Activated T-helper 2 cell treated with anti-CD3 and anti-CD28 coated beads, Interferon-gamma antibody, Interleukin-2, Interleukin-4, amounts not matched to agents 10 μg/mL and 5 μg/mL and 100 μg/mL, durations not matched to agents 14 hours and 24 hours and 36 hours (primary cell): ENCODE measurements at regions of chr14 and their contacts with region 1.

Region 1: GRCh38 chr14:23057757-23058653 is 685 bp upstream of the CDH24 start:
- DNase-seq: peak; percentile 79
- H3K4me3 Mint-ChIP-seq: peak overlapping the region; percentile 84
- H3K27ac Mint-ChIP-seq: peak overlapping the region; percentile 51
- H3K4me1 Mint-ChIP-seq: peaks cover 16% of the 10 kb centered on the region
- H3K27me3 Mint-ChIP-seq: peaks cover 7% of the 10 kb centered on the region

Region 2: GRCh38 chr14:22726012-22726411 is 332.0 kb before region 1 on chr14:
- intact Hi-C with region 1: no loop called
- DNase-seq: no peak
- H3K4me3 Mint-ChIP-seq: no peak overlapping the region
- H3K27ac Mint-ChIP-seq: no peak overlapping the region
- H3K4me1 Mint-ChIP-seq: no peaks in the 10 kb centered on the region
- H3K27me3 Mint-ChIP-seq: peaks cover 4% of the 10 kb centered on the region

Region 3: DNA sequence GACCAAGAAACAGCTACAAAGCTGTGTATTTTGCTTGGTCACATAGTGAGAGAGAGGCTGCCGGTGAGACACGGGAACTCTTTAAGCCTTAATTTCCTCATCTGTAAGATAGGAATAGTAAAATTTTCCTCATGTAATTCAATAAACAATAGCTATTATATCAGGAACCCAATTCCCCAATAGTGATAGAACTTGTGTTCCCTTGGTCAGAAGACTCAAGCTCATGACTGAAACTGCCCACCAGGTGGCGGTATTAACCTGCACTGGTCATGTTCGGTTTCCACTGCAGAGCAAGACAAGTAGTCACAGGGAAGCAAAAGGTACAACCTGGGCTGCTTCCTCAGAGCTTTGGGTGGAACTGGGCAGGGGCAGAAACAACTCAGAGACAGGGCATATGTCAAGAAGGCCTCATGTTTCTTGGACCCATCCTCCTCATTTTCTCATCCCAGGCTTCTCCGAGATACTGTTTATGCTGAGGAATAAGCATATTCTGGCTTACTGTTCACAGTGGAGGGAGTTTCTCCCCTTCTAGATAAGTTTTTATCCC is 71.4 kb before region 1 on chr14:
- intact Hi-C with region 1: loop called (anchors 1 kb)
- DNase-seq: peak; percentile 78
- H3K4me3 Mint-ChIP-seq: no peak overlapping the region
- H3K27ac Mint-ChIP-seq: no peak overlapping the region
- H3K4me1 Mint-ChIP-seq: no peaks in the 10 kb centered on the region
- H3K27me3 Mint-ChIP-seq: no peaks in the 10 kb centered on the region

Region 4: GRCh38 chr14:22994762-22995275 is 63.2 kb before region 1 on chr14:
- intact Hi-C with region 1: loop called (anchors 2 kb)
- DNase-seq: no peak
- H3K4me3 Mint-ChIP-seq: no peak overlapping the region
- H3K27ac Mint-ChIP-seq: no peak overlapping the region
- H3K4me1 Mint-ChIP-seq: peaks cover 5% of the 10 kb centered on the region
- H3K27me3 Mint-ChIP-seq: no peaks in the 10 kb centered on the region

Region 5: DNA sequence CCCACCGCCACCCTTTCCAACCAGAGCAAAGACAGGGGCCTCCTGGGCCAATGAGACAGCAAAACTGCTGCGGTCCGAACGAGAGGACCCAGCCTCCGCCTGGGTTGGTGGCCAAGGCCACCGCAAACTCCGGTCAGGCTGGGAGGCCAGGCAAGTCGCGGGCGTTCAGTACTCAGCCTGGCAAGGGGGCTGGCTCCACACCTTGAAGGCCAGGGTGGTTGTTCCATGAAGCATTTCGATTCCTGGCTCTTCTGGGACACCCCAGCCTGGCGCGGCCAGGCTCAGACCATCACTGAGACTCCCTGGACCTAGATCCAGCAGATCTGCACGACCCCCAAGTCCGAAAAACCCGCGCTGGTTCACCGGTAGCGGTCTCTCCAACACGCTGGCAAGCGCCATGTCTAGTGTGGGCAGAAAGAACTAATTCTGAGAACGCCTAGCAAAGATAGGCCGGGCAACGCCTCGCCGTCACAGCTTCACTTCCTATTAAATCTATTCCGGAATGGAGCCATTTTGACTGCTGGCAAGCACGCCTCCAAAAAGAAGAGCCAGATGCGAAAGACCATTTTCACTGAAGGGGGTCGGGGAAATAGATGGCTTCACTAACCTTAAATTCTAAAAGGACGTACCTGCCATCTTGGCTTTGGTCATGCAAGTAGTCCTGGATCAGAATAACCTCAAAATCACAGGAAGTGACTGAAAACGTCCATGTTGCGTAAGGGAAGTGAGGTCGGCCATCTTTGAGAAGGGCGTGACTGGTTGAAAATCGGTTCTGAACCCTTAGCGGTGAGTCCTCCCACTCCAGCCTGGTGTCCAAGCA is 23.3 kb before region 1 on chr14 and contains the start of gene PSMB5:
- intact Hi-C with region 1: loop called (anchors 2 kb)
- DNase-seq: peak; percentile 86
- H3K4me3 Mint-ChIP-seq: peak within 1 kb of the TSS; percentile 92
- H3K27ac Mint-ChIP-seq: peak within 1 kb of the TSS; percentile 88
- H3K4me1 Mint-ChIP-seq: peaks cover 22% of the 10 kb centered on the region
- H3K27me3 Mint-ChIP-seq: peaks cover 2% of the 10 kb centered on the region
- total RNA-seq, gene PSMB5: 124 and 134 TPM in 2 replicates